ENCODE measurements at regions of chr12 and their contacts with region 1.

Region 1: DNA sequence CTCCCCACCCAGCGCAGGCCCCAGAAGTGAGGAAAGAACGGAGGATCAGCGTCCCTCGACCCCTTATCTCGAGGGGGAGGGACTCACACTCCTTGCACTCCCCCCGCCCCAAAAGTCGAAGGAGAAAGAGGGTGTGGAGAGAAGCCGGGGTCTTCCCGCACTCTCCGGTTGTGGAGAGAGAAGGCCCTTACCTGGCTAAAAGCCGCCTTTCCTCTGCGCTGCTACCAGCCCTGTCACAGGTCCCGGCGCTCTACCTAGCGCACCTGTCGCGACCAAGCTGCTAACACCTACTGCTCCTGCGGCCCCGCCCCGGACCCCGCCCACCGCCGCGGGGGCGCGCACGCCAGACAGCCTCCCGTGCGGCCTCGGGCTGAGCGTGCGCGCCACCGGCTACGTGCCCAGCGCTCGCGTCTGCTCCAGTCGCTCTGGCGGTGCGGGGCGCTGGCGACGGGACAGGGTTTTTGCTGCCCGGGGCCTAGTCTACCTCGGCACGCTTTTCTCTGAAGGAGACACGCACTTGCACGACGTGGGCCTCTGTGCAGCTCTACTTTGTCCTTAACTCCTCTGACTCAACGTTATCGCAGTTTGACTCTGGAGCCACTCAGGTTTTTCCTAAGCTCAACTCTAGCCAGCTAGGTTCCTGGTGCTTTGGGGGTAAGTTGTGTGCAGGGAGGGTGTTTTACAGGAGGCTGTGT is at the start of gene LIMA1:
- DNase-seq: peak; percentile 98
- H3K4me3 Mint-ChIP-seq: peak within 1 kb of the TSS; percentile 84
- H3K27ac Mint-ChIP-seq: peak within 1 kb of the TSS; percentile 80
- H3K4me1 Mint-ChIP-seq: peaks cover 14% of the 10 kb centered on the region
- H3K27me3 Mint-ChIP-seq: peaks cover 15% of the 10 kb centered on the region
- total RNA-seq, gene LIMA1: 94.6 and 98.2 TPM in 2 replicates

Region 2: GRCh38 chr12:50187084-50187900 is 96.1 kb before region 1 on chr12:
- intact Hi-C with region 1: loop called (anchors 1 kb)
- DNase-seq: peak; percentile 74
- H3K4me3 Mint-ChIP-seq: peak overlapping the region; percentile 72
- H3K27ac Mint-ChIP-seq: peak overlapping the region; percentile 95
- H3K4me1 Mint-ChIP-seq: peaks cover 54% of the 10 kb centered on the region
- H3K27me3 Mint-ChIP-seq: no peaks in the 10 kb centered on the region

Region 3: GRCh38 chr12:50222275-50222795 is 61.0 kb before region 1 on chr12:
- intact Hi-C with region 1: loop called (anchors 1 kb)
- DNase-seq: peak; percentile 79
- H3K4me3 Mint-ChIP-seq: no peak overlapping the region
- H3K27ac Mint-ChIP-seq: no peak overlapping the region
- H3K4me1 Mint-ChIP-seq: peaks cover 21% of the 10 kb centered on the region
- H3K27me3 Mint-ChIP-seq: no peaks in the 10 kb centered on the region

Region 4: DNA sequence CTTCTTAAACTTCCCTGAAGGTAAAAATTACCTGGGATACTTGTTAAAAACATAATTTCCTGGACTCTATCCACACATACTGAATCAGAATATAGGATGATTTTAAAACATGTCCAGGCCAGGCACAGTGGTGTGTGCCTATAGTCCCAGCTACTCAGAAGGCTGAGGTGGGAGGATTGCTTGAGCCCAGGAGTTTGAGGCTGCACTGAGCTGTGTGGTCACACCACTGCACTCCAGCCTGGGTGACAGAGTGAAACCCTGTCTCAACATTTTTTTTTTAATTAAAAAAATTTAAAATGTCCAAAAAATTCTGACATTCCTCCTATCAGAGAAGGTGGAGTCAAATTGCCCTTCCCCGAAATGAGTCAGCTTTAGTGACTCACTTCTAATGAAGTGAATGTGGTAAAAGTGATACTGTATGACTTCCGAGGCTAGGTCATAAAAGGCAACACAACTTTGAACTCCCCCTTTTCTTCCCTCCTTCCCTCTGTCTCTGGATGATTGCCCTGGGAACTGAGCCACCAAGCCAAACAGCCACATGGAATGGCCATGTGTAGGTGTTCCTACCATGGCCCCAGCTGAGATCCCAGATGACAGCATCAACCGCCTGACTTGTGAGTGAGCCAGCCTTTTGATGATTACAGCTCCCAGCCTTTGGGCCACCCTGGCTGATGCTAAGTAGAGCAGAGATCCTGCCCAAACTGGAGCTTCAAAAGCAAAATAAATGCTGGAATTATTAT is 36.3 kb before region 1 on chr12:
- intact Hi-C with region 1: loop called (anchors 1 kb)
- DNase-seq: peak; percentile 73
- H3K4me3 Mint-ChIP-seq: peak overlapping the region; percentile 66
- H3K27ac Mint-ChIP-seq: peak overlapping the region; percentile 86
- H3K4me1 Mint-ChIP-seq: peaks cover 34% of the 10 kb centered on the region
- H3K27me3 Mint-ChIP-seq: no peaks in the 10 kb centered on the region

Region 5: GRCh38 chr12:50400598-50401364 is 117.4 kb after region 1 on chr12 and contains the start of gene LARP4:
- intact Hi-C with region 1: loop called (anchors 1 kb)
- DNase-seq: peak; percentile 98
- H3K4me3 Mint-ChIP-seq: peak within 1 kb of the TSS; percentile 99
- H3K27ac Mint-ChIP-seq: peak within 1 kb of the TSS; percentile 97
- H3K4me1 Mint-ChIP-seq: peaks cover 12% of the 10 kb centered on the region
- H3K27me3 Mint-ChIP-seq: peaks cover 6% of the 10 kb centered on the region
- total RNA-seq, gene LARP4: 117 and 130 TPM in 2 replicates